Adrenal gland (tissue), 19 donors: ENCODE measurements at regions of chr2 and their contacts with region 1.

Region 1: GRCh38 chr2:30089171-30089570 is 57.6 kb upstream of the YPEL5 start:
- DNase-seq: no peak
- H3K4me3 ChIP-seq: no peak overlapping the region
- H3K27ac ChIP-seq: no peak overlapping the region
- H3K4me1 ChIP-seq: no peaks in the 10 kb centered on the region
- H3K27me3 ChIP-seq: no peaks in the 10 kb centered on the region
- CTCF ChIP-seq: no peak
- POLR2A ChIP-seq: no peak

Region 2: DNA sequence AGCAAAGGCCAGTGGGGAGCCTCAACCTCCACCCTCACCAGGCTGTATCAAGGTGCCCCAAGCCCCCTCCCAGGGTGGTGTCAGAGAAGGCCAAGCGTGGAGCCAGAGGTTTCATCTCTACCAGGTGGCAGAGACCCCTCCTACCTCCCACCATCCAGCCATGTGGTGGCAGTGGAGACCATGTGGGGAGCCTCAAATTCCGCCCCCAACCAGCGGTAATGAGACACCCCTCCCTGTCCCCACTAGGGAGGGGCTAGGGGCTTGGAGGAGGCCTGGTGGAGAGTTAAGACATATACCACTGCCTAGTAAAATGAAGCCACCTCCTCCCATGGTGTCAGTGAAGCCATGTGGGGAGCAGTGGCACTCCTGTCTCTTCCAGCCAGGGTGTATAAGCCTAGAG is 33.2 kb after region 1 on chr2:
- intact Hi-C with region 1: loop called in 1 of 2 experiments (anchors 5 kb)
- DNase-seq: no peak
- H3K4me3 ChIP-seq: no peak overlapping the region
- H3K27ac ChIP-seq: no peak overlapping the region
- H3K4me1 ChIP-seq: no peaks in the 10 kb centered on the region
- H3K27me3 ChIP-seq: no peaks in the 10 kb centered on the region
- CTCF ChIP-seq: no peak
- POLR2A ChIP-seq: no peak